ENCODE measurements at regions of chr1 and their contacts with region 1.

Region 1: GRCh38 chr1:203625628-203626019 is 1.0 kb upstream of the ATP2B4 start:
- DNase-seq: peak; percentile 76
- ATAC-seq: peak; percentile 55
- H3K4me3 ChIP-seq: peak overlapping the region in 3 of 5 experiments; percentile 61 to 71 (median 67)
- H3K4me3 Mint-ChIP-seq: peak overlapping the region; percentile 95
- H3K27ac ChIP-seq: peak overlapping the region in 1 of 2 donors; percentile 73
- H3K27ac Mint-ChIP-seq: peak overlapping the region; percentile 73
- H3K4me1 ChIP-seq: peaks cover 39 to 50% of the 10 kb centered on the region in 2 donors
- H3K4me1 Mint-ChIP-seq: peaks cover 45% of the 10 kb centered on the region
- H3K27me3 ChIP-seq: no peaks in the 10 kb centered on the region
- H3K27me3 Mint-ChIP-seq: peaks cover 5% of the 10 kb centered on the region
- CTCF ChIP-seq: peak; percentile 70

Region 2: GRCh38 chr1:203186446-203187303 is 438.9 kb before region 1 on chr1 and contains the start of gene CHI3L1:
- CTCF ChIA-PET with region 1: no interaction called
- POLR2A ChIA-PET with region 1: no interaction called
- intact Hi-C with region 1: no loop called
- DNase-seq: no peak
- ATAC-seq: no peak
- H3K4me3 ChIP-seq: no peak within 1 kb of the TSS
- H3K4me3 Mint-ChIP-seq: no peak within 1 kb of the TSS
- H3K27ac ChIP-seq: no peak within 1 kb of the TSS
- H3K27ac Mint-ChIP-seq: no peak within 1 kb of the TSS
- H3K4me1 ChIP-seq: no peaks in the 10 kb centered on the region
- H3K4me1 Mint-ChIP-seq: no peaks in the 10 kb centered on the region
- H3K27me3 ChIP-seq: peaks cover 0 to 5% (median 0%) of the 10 kb centered on the region in 4 experiments
- H3K27me3 Mint-ChIP-seq: peaks cover 20% of the 10 kb centered on the region
- CTCF ChIP-seq: no peak
- total RNA-seq, gene CHI3L1: 0.15 TPM in 1 of 2 replicates, not detected in the other

Region 3: GRCh38 chr1:203326830-203327683 is 298.6 kb before region 1 on chr1:
- CTCF ChIA-PET with region 1: interaction called, 3 read pairs
- POLR2A ChIA-PET with region 1: no interaction called
- intact Hi-C with region 1: loop called (anchors 5 kb)
- DNase-seq: peak; percentile 95
- ATAC-seq: peak; percentile 67
- H3K4me3 ChIP-seq: peak overlapping the region; percentile 35 to 77 (median 56)
- H3K4me3 Mint-ChIP-seq: peak overlapping the region; percentile 88
- H3K27ac ChIP-seq: peak overlapping the region; percentile 96 to 97
- H3K27ac Mint-ChIP-seq: peak overlapping the region; percentile 98
- H3K4me1 ChIP-seq: peaks cover 56 to 62% of the 10 kb centered on the region in 2 donors
- H3K4me1 Mint-ChIP-seq: peaks cover 71% of the 10 kb centered on the region
- H3K27me3 ChIP-seq: no peaks in the 10 kb centered on the region
- H3K27me3 Mint-ChIP-seq: no peaks in the 10 kb centered on the region
- CTCF ChIP-seq: no peak

Region 4: DNA sequence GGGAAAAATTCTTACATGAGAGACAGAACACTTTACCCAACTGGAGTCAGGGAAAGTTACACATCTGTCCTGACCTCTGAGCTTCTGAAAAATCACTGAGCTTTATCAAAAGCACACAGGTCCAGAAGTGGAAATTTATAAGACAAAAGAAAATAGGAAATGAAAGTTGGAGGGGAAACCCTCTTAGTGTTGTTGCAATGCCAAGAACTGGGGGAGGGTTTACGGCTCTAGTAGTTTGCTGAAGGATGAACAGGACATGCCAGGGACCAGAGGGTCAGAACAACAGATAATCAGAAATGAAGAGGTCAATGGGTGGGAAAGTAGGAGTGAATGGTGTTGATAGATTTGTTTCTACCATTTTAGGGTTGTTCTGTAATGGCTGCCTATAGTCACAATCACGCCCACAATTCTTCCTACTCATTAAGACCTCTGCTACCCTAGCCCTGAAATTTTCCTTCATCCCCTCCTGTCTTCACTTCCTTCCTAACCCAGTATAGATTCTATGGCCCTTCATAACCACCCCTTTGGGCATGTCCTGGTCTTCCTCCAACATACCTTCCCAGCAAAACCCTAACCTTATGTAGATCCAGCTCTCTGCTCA is 244.4 kb before region 1 on chr1:
- CTCF ChIA-PET with region 1: no interaction called
- POLR2A ChIA-PET with region 1: no interaction called
- intact Hi-C with region 1: no loop called
- DNase-seq: peak; percentile 82
- ATAC-seq: peak; percentile 89
- H3K4me3 ChIP-seq: peak overlapping the region in 2 of 5 experiments; percentile 34 to 49
- H3K4me3 Mint-ChIP-seq: peak overlapping the region; percentile 72
- H3K27ac ChIP-seq: peak overlapping the region; percentile 73 to 82
- H3K27ac Mint-ChIP-seq: peak overlapping the region; percentile 76
- H3K4me1 ChIP-seq: peaks cover 38 to 45% of the 10 kb centered on the region in 2 donors
- H3K4me1 Mint-ChIP-seq: peaks cover 45% of the 10 kb centered on the region
- H3K27me3 ChIP-seq: no peaks in the 10 kb centered on the region
- H3K27me3 Mint-ChIP-seq: no peaks in the 10 kb centered on the region
- CTCF ChIP-seq: no peak

Region 5: DNA sequence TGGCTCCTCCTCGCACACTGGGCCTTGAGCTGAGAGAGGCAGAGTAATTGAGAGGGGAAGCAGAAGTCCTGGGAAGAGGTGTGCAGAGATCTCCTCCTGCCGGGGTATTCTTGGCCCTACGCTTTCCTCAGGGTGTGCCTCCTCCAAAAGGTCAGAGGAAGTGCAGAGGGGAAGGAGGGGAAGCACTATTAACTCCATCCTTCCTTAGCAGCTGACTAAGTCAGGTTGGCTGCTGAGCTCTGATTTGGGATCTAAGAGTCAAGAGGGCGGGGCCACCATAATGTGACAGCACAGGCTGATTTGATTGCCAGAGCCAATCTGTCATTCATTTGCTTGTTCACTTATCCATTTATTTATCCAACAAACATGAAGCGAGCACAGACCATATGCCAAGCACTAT is 13.3 kb after region 1 on chr1:
- CTCF ChIA-PET with region 1: interaction called, 15 read pairs
- POLR2A ChIA-PET with region 1: interaction called, 3 read pairs
- intact Hi-C with region 1: no loop called
- DNase-seq: no peak
- ATAC-seq: no peak
- H3K4me3 ChIP-seq: no peak overlapping the region
- H3K4me3 Mint-ChIP-seq: no peak overlapping the region
- H3K27ac ChIP-seq: no peak overlapping the region
- H3K27ac Mint-ChIP-seq: no peak overlapping the region
- H3K4me1 ChIP-seq: peaks cover 10 to 12% of the 10 kb centered on the region in 2 donors
- H3K4me1 Mint-ChIP-seq: peaks cover 26% of the 10 kb centered on the region
- H3K27me3 ChIP-seq: no peaks in the 10 kb centered on the region
- H3K27me3 Mint-ChIP-seq: no peaks in the 10 kb centered on the region
- CTCF ChIP-seq: no peak

Region 6: GRCh38 chr1:203702130-203702577 is 76.5 kb after region 1 on chr1:
- CTCF ChIA-PET with region 1: interaction called, 94 read pairs
- POLR2A ChIA-PET with region 1: no interaction called
- intact Hi-C with region 1: loop called (anchors 1 kb)
- DNase-seq: peak; percentile 78
- ATAC-seq: peak; percentile 64
- H3K4me3 ChIP-seq: no peak overlapping the region
- H3K4me3 Mint-ChIP-seq: no peak overlapping the region
- H3K27ac ChIP-seq: no peak overlapping the region
- H3K27ac Mint-ChIP-seq: no peak overlapping the region
- H3K4me1 ChIP-seq: peaks cover 0 to 9% of the 10 kb centered on the region in 2 donors
- H3K4me1 Mint-ChIP-seq: peaks cover 2% of the 10 kb centered on the region
- H3K27me3 ChIP-seq: no peaks in the 10 kb centered on the region
- H3K27me3 Mint-ChIP-seq: no peaks in the 10 kb centered on the region
- CTCF ChIP-seq: peak; percentile 90

Region 7: DNA sequence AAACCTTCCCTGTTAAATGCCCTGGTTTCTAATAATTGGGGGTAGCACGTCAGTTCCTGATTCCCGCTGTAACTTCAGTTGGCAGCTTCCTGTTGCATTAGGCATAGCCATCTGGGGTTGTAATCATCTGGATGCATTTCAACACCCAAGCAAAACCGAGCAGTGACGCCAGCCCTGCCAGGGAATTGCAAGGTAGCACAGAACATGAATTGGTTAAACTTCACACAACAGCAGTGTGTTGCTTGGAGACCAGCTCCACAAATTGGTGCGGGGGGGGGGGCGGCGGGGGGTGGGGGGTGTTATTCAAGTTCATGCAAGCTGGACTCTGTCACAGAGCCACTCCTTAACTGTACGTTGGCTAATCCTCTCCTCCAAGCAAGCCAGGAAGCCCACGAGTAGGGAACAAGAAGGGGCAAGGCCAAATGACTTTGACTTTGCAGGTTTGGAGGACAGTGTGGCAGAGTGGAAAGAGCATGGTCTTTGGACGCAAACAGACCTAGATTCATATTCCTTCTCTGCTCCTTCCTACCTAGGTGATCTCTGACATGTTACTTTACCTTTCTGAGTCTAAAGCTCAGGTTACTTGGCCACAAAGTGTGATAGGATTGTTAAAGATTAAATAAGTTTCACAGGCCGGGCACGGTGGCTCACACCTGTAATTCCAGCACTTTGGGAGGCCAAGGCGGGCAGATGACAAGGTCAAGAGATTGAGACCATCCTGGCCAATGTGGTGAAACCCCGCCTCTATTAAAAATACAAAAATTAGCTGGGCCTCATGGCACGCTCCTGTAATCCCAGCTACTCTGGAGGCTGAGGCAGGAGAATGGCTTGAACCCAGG is 144.1 kb after region 1 on chr1:
- CTCF ChIA-PET with region 1: no interaction called
- POLR2A ChIA-PET with region 1: interaction called, 5 read pairs
- intact Hi-C with region 1: loop called (anchors 5 kb)
- DNase-seq: no peak
- ATAC-seq: no peak
- H3K4me3 ChIP-seq: no peak overlapping the region
- H3K4me3 Mint-ChIP-seq: no peak overlapping the region
- H3K27ac ChIP-seq: no peak overlapping the region
- H3K27ac Mint-ChIP-seq: no peak overlapping the region
- H3K4me1 ChIP-seq: peaks cover 4 to 17% of the 10 kb centered on the region in 2 donors
- H3K4me1 Mint-ChIP-seq: peaks cover 22% of the 10 kb centered on the region
- H3K27me3 ChIP-seq: peaks cover 0 to 2% (median 0%) of the 10 kb centered on the region in 4 experiments
- H3K27me3 Mint-ChIP-seq: no peaks in the 10 kb centered on the region
- CTCF ChIP-seq: no peak

Region 8: GRCh38 chr1:203861379-203862184 is 236.0 kb after region 1 on chr1 and contains the start of gene SNRPE:
- CTCF ChIA-PET with region 1: no interaction called
- POLR2A ChIA-PET with region 1: no interaction called
- intact Hi-C with region 1: loop called (anchors 1 kb)
- DNase-seq: peak; percentile 98
- ATAC-seq: peak; percentile 99
- H3K4me3 ChIP-seq: peak within 1 kb of the TSS; percentile 82 to 99 (median 96)
- H3K4me3 Mint-ChIP-seq: peak within 1 kb of the TSS; percentile 98
- H3K27ac ChIP-seq: peak within 1 kb of the TSS; percentile 57 to 81
- H3K27ac Mint-ChIP-seq: peak within 1 kb of the TSS; percentile 96
- H3K4me1 ChIP-seq: peaks cover 9 to 17% of the 10 kb centered on the region in 2 donors
- H3K4me1 Mint-ChIP-seq: peaks cover 21% of the 10 kb centered on the region
- H3K27me3 ChIP-seq: no peaks in the 10 kb centered on the region
- H3K27me3 Mint-ChIP-seq: no peaks in the 10 kb centered on the region
- CTCF ChIP-seq: peak; percentile 93
- total RNA-seq, gene SNRPE: 56.0 and 80.8 TPM in 2 replicates

Measured in B cell (primary cell).